Activated B cell treated with CpG ODN at 0.5 μM for 24 hours (primary cell): ENCODE measurements at regions of chr10 and their contacts with region 1.

Region 1: GRCh38 chr10:12042797-12043651 is at the start of gene UPF2:
- DNase-seq: peak; percentile 90
- ATAC-seq: peak; percentile 74
- H3K4me3 Mint-ChIP-seq: peak within 1 kb of the TSS; percentile 95
- H3K27ac Mint-ChIP-seq: peak within 1 kb of the TSS; percentile 100
- H3K4me1 Mint-ChIP-seq: peaks cover 49% of the 10 kb centered on the region
- H3K27me3 Mint-ChIP-seq: no peaks in the 10 kb centered on the region
- CTCF ChIP-seq: no peak
- total RNA-seq, gene UPF2: 57.9 and 58.0 TPM in 2 replicates

Region 2: DNA sequence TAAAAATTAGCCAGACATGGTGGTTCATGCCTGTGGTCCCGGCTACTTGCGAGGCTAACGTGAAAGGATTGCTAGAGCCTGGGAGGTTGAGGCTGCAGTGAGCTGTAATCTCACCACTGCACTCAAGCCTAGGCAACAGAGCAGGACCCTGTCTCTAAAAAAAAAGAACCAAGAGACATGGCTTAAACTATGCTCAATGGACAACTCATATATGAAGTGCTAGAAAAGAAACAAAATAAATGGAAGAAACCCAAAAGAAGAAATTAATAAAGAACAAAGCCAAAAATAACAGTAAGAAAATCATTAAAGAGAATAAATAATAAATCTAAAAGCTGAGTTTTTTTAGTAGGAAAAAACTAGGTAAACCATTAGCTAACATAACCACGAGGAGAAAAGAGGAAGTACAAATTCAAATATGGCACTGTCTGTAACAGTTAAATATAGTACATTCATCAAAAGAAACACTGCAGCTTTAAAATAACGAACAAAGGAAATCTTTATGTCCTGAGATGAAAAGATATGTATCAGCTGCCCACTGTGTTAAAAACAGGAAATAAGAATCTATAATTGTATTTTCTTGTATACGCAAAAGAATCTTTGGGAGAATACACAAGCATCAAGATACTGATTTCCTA is 49.1 kb before region 1 on chr10:
- CTCF ChIA-PET with region 1: no interaction called
- POLR2A ChIA-PET with region 1: interaction called, 22 read pairs
- intact Hi-C with region 1: loop called (anchors 5 kb)
- DNase-seq: no peak
- ATAC-seq: peak; percentile 72
- H3K4me3 Mint-ChIP-seq: peak overlapping the region; percentile 56
- H3K27ac Mint-ChIP-seq: peak overlapping the region; percentile 85
- H3K4me1 Mint-ChIP-seq: peaks cover 40% of the 10 kb centered on the region
- H3K27me3 Mint-ChIP-seq: no peaks in the 10 kb centered on the region
- CTCF ChIP-seq: no peak

Region 3: DNA sequence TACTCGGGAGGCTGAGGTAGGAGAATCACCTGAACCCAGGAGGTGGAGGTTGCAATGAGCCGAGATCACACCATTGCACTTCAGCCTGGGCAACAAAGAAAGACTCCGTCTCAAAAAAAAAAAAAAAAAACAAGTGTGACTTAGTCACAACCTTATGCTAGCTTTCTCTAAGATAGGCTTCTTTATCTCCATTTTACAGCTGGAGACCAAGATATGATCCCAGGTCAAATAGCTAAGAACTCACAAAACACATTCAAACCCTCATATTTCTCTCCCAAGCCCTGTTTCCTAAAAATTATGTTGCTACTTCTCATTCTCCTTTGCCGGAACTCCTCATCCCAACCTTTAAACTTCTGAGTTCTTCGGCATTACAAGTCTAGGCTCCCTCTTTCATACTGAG is 12.7 kb after region 1 on chr10:
- CTCF ChIA-PET with region 1: no interaction called
- POLR2A ChIA-PET with region 1: interaction called, 90 read pairs
- intact Hi-C with region 1: loop called (anchors 1 kb)
- DNase-seq: no peak
- ATAC-seq: no peak
- H3K4me3 Mint-ChIP-seq: no peak overlapping the region
- H3K27ac Mint-ChIP-seq: no peak overlapping the region
- H3K4me1 Mint-ChIP-seq: peaks cover 32% of the 10 kb centered on the region
- H3K27me3 Mint-ChIP-seq: no peaks in the 10 kb centered on the region
- CTCF ChIP-seq: no peak

Region 4: DNA sequence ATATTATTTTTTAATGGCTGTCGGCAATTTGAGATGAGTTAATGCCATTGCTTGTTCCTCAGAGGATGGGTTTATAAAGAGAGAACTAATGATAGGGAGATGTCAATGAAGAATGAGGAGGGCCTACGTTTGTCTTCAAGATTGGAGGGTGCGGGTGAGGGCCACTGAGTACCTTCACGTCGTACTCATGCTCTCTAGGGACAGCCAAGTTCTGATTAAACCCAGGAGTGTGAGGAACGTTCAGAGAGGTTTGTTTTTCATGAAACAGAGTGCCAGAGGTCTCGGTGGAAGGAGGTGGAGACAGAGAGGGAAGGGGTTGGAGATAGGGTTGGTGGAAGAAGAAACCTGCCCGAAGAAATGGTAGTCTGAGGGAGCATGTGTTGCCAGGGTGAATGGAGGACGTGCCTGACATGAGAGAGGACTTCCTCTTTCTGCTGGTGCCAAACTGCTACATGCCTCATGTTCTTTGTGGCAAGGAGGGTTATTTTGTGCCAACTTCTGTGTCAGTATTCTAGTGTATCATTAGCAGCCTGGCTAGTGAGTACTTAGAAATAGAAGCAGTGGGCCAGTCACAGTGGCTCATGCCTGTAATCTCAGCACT is 34.7 kb after region 1 on chr10:
- CTCF ChIA-PET with region 1: interaction called, 3 read pairs
- POLR2A ChIA-PET with region 1: interaction called, 277 read pairs
- intact Hi-C with region 1: loop called (anchors 1 kb)
- DNase-seq: peak; percentile 36
- ATAC-seq: peak; percentile 71
- H3K4me3 Mint-ChIP-seq: peak overlapping the region; percentile 47
- H3K27ac Mint-ChIP-seq: peak overlapping the region; percentile 98
- H3K4me1 Mint-ChIP-seq: peaks cover 70% of the 10 kb centered on the region
- H3K27me3 Mint-ChIP-seq: no peaks in the 10 kb centered on the region
- CTCF ChIP-seq: no peak

Region 5: GRCh38 chr10:12140038-12140437 is 97.0 kb after region 1 on chr10:
- CTCF ChIA-PET with region 1: no interaction called
- POLR2A ChIA-PET with region 1: no interaction called
- intact Hi-C with region 1: no loop called
- DNase-seq: no peak
- ATAC-seq: no peak
- H3K4me3 Mint-ChIP-seq: no peak overlapping the region
- H3K27ac Mint-ChIP-seq: no peak overlapping the region
- H3K4me1 Mint-ChIP-seq: no peaks in the 10 kb centered on the region
- H3K27me3 Mint-ChIP-seq: no peaks in the 10 kb centered on the region
- CTCF ChIP-seq: no peak

Region 6: GRCh38 chr10:12195603-12196506 is 152.8 kb after region 1 on chr10 and contains the starts of genes CDC123 and NUDT5:
- CTCF ChIA-PET with region 1: no interaction called
- POLR2A ChIA-PET with region 1: interaction called, 23 read pairs
- intact Hi-C with region 1: loop called (anchors 2 kb)
- DNase-seq: peak; percentile 81
- ATAC-seq: peak; percentile 92
- H3K4me3 Mint-ChIP-seq: peak within 1 kb of the TSS; percentile 93
- H3K27ac Mint-ChIP-seq: peak within 1 kb of the TSS; percentile 99
- H3K4me1 Mint-ChIP-seq: peaks cover 49% of the 10 kb centered on the region
- H3K27me3 Mint-ChIP-seq: no peaks in the 10 kb centered on the region
- CTCF ChIP-seq: no peak
- total RNA-seq, gene CDC123: 81.1 and 84.6 TPM in 2 replicates
- total RNA-seq, gene NUDT5: 53.2 and 57.3 TPM in 2 replicates

Region 7: GRCh38 chr10:12348870-12349628 is 306.0 kb after region 1 on chr10 and contains the start of gene CAMK1D:
- CTCF ChIA-PET with region 1: no interaction called
- POLR2A ChIA-PET with region 1: interaction called, 4 read pairs
- intact Hi-C with region 1: loop called (anchors 10 kb)
- DNase-seq: peak; percentile 87
- ATAC-seq: peak; percentile 66
- H3K4me3 Mint-ChIP-seq: peak within 1 kb of the TSS; percentile 98
- H3K27ac Mint-ChIP-seq: peak within 1 kb of the TSS; percentile 98
- H3K4me1 Mint-ChIP-seq: peaks cover 61% of the 10 kb centered on the region
- H3K27me3 Mint-ChIP-seq: no peaks in the 10 kb centered on the region
- CTCF ChIP-seq: no peak
- total RNA-seq, gene CAMK1D: 51.7 and 58.8 TPM in 2 replicates